ENCODE measurements at regions of chr17 and their contacts with region 1.

Region 1: GRCh38 chr17:64129764-64130558 is at the start of gene ERN1:
- DNase-seq: peak; percentile 83 to 96 (median 90)
- ATAC-seq: peak; percentile 90
- H3K4me3 ChIP-seq: peak within 1 kb of the TSS; percentile 70 to 76
- H3K4me3 Mint-ChIP-seq: peak within 1 kb of the TSS; percentile 89
- H3K27ac ChIP-seq: peak within 1 kb of the TSS; percentile 82 to 96
- H3K27ac Mint-ChIP-seq: peak within 1 kb of the TSS; percentile 97
- H3K4me1 ChIP-seq: peaks cover 23% of the 10 kb centered on the region
- H3K4me1 Mint-ChIP-seq: peaks cover 46% of the 10 kb centered on the region
- H3K27me3 ChIP-seq: no peaks in the 10 kb centered on the region
- H3K27me3 Mint-ChIP-seq: no peaks in the 10 kb centered on the region
- CTCF ChIP-seq: no peak
- total RNA-seq, gene ERN1: 57.1 to 64.0 TPM

Region 2: GRCh38 chr17:63827002-63827771 is 302.8 kb before region 1 on chr17 and contains the starts of genes FTSJ3 and PSMC5:
- CTCF ChIA-PET with region 1: no interaction called
- POLR2A ChIA-PET with region 1: no interaction called
- intact Hi-C with region 1: no loop called
- DNase-seq: peak; percentile 91 to 99 (median 95)
- ATAC-seq: peak; percentile 92
- H3K4me3 ChIP-seq: peak within 1 kb of the TSS; percentile 74 to 75
- H3K4me3 Mint-ChIP-seq: peak within 1 kb of the TSS; percentile 100
- H3K27ac ChIP-seq: peak within 1 kb of the TSS; percentile 66 to 96
- H3K27ac Mint-ChIP-seq: peak within 1 kb of the TSS; percentile 98
- H3K4me1 ChIP-seq: peaks cover 56% of the 10 kb centered on the region
- H3K4me1 Mint-ChIP-seq: peaks cover 81% of the 10 kb centered on the region
- H3K27me3 ChIP-seq: no peaks in the 10 kb centered on the region
- H3K27me3 Mint-ChIP-seq: no peaks in the 10 kb centered on the region
- CTCF ChIP-seq: peak; percentile 51
- total RNA-seq, gene FTSJ3: 60.0 to 70.3 TPM
- total RNA-seq, gene PSMC5: 88.5 to 90.3 TPM

Region 3: GRCh38 chr17:63919311-63919723 is 210.6 kb before region 1 on chr17:
- CTCF ChIA-PET with region 1: interaction called, 97 read pairs
- POLR2A ChIA-PET with region 1: interaction called, 3 read pairs
- intact Hi-C with region 1: loop called (anchors 1 kb)
- DNase-seq: peak; percentile 53 to 88 (median 72)
- ATAC-seq: peak; percentile 100
- H3K4me3 ChIP-seq: no peak overlapping the region
- H3K4me3 Mint-ChIP-seq: no peak overlapping the region
- H3K27ac ChIP-seq: no peak overlapping the region
- H3K27ac Mint-ChIP-seq: no peak overlapping the region
- H3K4me1 ChIP-seq: no peaks in the 10 kb centered on the region
- H3K4me1 Mint-ChIP-seq: peaks cover 8% of the 10 kb centered on the region
- H3K27me3 ChIP-seq: no peaks in the 10 kb centered on the region
- H3K27me3 Mint-ChIP-seq: no peaks in the 10 kb centered on the region
- CTCF ChIP-seq: peak; percentile 91

Region 4: GRCh38 chr17:64020056-64020766 is 109.8 kb before region 1 on chr17 and contains the start of gene ICAM2:
- CTCF ChIA-PET with region 1: interaction called, 455 read pairs
- POLR2A ChIA-PET with region 1: interaction called, 89 read pairs
- intact Hi-C with region 1: loop called in 1 of 2 experiments (anchors 1 kb)
- DNase-seq: peak; percentile 83 to 99 (median 90)
- ATAC-seq: peak; percentile 73
- H3K4me3 ChIP-seq: peak within 1 kb of the TSS; percentile 78 to 87
- H3K4me3 Mint-ChIP-seq: peak within 1 kb of the TSS; percentile 99
- H3K27ac ChIP-seq: peak within 1 kb of the TSS; percentile 95 to 99
- H3K27ac Mint-ChIP-seq: peak within 1 kb of the TSS; percentile 100
- H3K4me1 ChIP-seq: peaks cover 72% of the 10 kb centered on the region
- H3K4me1 Mint-ChIP-seq: peaks cover 79% of the 10 kb centered on the region
- H3K27me3 ChIP-seq: no peaks in the 10 kb centered on the region
- H3K27me3 Mint-ChIP-seq: no peaks in the 10 kb centered on the region
- CTCF ChIP-seq: no peak
- total RNA-seq, gene ICAM2: 38.0 to 38.7 TPM

Region 5: DNA sequence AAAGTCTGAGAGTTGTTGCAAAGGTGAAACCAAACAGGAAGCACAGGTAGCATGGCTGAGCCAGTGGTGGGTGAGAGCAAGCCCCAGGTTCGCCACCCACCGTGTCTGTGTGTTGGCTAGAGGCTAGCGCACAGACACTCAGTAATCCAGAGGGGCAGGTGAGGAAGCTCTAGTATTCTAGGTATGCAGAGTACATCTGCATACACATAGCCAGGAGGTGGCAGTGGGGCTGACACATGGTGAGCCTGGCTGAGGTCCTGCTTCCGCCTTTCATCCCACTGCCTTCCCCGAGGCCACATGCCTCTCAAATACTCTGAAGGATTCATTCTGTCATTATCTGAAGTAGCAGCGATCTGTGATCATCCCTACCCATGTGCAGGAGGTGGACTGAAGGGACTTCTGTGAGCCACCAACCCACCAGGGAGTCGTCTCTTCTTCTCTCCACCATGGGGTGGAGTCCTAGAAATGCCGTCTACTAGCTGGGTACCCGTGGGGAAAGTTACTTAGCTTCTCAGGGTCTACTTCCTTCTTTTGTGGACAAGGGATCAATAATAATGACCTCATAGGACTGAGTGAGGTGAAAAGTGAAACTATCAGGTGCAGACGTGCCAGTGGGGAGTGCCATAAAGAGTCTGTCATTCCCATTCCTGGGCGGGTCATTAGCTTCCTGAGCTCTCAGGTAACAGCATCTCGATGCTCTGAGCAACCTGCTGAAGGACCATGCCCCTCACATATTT is 73.5 kb before region 1 on chr17:
- CTCF ChIA-PET with region 1: interaction called, 220 read pairs
- POLR2A ChIA-PET with region 1: interaction called, 14 read pairs
- intact Hi-C with region 1: loop called in 1 of 2 experiments (anchors 1 kb)
- DNase-seq: peak in 2 of 9 experiments; percentile 22 to 44
- ATAC-seq: peak; percentile 39
- H3K4me3 ChIP-seq: no peak overlapping the region
- H3K4me3 Mint-ChIP-seq: no peak overlapping the region
- H3K27ac ChIP-seq: peak overlapping the region; percentile 12 to 58
- H3K27ac Mint-ChIP-seq: peak overlapping the region; percentile 78
- H3K4me1 ChIP-seq: peaks cover 18% of the 10 kb centered on the region
- H3K4me1 Mint-ChIP-seq: peaks cover 41% of the 10 kb centered on the region
- H3K27me3 ChIP-seq: no peaks in the 10 kb centered on the region
- H3K27me3 Mint-ChIP-seq: no peaks in the 10 kb centered on the region
- CTCF ChIP-seq: no peak

Region 6: DNA sequence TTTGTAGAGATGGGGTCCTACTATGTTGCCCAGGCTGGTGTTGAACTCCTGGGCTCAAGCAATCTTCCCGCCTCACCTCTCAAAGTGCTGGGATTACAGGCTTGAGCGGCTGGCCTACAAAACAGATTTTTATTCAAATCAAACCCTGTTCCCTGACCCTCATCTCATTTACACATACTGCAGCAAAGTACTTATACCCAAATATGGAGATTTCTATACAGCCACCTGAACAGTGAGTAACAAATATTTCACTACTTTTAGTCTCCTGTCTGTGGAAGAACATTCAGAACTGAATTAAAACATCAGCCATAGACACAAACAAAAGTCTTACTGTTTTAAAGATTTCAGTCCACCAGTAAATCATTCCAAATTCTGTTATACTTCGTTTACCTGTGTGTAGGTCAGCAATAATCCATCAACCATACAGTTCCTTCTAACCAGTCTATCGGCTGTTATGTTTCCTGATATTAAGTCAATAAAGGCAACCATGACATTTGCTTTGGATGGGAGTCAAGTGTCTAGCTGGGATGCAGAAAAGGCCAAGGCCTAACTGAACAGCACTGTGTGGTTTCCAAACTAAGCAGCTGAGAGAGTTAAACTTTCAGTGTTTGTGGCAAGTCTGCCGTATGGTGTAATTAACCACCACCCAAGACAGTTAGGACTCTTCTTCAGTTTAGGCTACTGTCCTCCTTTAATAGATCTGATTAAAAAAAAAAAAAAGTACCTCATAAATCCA is 22.3 kb before region 1 on chr17:
- CTCF ChIA-PET with region 1: interaction called, 10 read pairs
- POLR2A ChIA-PET with region 1: interaction called, 7 read pairs
- intact Hi-C with region 1: loop called in 1 of 2 experiments (anchors 2 kb)
- DNase-seq: no peak
- ATAC-seq: no peak
- H3K4me3 ChIP-seq: no peak overlapping the region
- H3K4me3 Mint-ChIP-seq: peak overlapping the region; percentile 3
- H3K27ac ChIP-seq: peak overlapping the region in 1 of 2 experiments; percentile 49
- H3K27ac Mint-ChIP-seq: peak overlapping the region; percentile 87
- H3K4me1 ChIP-seq: peaks cover 24% of the 10 kb centered on the region
- H3K4me1 Mint-ChIP-seq: peaks cover 69% of the 10 kb centered on the region
- H3K27me3 ChIP-seq: no peaks in the 10 kb centered on the region
- H3K27me3 Mint-ChIP-seq: no peaks in the 10 kb centered on the region
- CTCF ChIP-seq: no peak

Measured in CD8-positive, alpha-beta T cell (primary cell).